ENCODE measurements at regions of chr21 and their contacts with region 1.

Region 1: DNA sequence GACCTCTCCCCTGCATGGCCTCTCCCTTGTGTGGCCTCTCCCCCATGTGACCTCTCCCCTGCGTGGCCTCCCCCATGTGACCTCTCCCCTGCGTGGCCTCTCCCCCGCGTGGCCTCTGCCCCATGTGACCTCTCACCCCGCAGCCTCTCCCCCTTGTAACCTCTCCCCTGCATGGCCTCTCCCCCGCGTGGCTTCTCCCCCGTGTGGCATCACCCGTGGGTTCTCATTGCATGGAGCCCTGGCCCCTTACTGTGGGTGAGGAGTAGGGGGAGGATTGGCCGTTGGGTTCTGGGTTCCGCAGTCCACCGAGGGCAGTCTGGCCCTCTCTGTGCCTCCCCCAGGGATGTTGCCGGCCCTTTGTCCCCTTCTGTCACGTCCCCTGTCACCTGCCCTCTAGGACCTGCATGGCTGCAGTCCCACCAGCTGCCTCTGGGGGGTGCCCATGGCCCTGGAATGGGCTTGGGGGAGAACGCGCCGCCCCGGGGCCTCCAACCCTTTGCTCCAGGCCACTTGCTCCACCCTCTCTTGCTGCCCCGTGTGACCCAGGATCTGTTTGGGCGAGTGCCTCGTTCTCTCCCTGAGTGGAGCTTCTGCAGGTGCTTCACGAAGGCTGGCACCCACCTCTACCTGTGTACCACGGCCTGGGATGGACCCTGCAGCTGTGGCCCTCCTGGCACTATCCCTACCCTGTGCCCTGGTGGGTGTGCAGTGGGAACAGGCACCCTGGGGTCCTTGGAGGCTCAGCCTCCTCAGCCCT is 21.3 kb downstream of the RRP1 start:
- DNase-seq: peak; percentile 71 to 90 (median 84)
- H3K4me3 ChIP-seq: no peak overlapping the region
- H3K27ac ChIP-seq: no peak overlapping the region
- H3K4me1 ChIP-seq: peaks cover 28% of the 10 kb centered on the region
- H3K27me3 ChIP-seq: no peaks in the 10 kb centered on the region
- CTCF ChIP-seq: peak; percentile 83 to 90 (median 89)
- EP300 ChIP-seq: no peak
- POLR2A ChIP-seq: no peak

Region 2: DNA sequence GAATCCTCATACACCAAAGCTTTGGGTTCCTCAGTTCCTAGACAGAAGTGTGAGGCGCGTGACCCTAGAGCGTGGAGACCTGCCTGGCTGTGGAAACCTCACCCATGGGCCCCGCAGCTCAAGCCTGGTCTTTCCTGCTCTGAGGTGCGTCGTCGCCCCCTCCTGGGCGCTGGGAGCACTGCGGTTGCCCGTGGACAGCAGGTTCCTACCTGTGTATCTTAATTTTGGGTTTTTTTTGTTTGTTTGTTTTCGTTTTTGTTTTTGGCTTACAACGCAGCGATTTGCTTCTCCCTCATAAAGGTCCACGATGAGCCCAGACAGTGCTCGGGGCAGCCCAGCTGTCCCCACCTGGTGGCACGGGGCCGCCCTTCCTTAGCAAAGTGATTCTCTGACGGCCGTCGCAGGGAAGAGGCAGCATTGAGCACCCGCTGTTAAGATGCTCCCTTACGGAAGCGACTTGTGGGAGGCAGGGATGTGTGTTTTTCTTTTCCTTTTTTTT is 164.9 kb after region 1 on chr21:
- intact Hi-C with region 1: loop called in 1 of 4 experiments (anchors 5 kb)
- DNase-seq: peak; percentile 76 to 91 (median 86)
- H3K4me3 ChIP-seq: no peak overlapping the region
- H3K27ac ChIP-seq: no peak overlapping the region
- H3K4me1 ChIP-seq: peaks cover 9% of the 10 kb centered on the region
- H3K27me3 ChIP-seq: no peaks in the 10 kb centered on the region
- CTCF ChIP-seq: peak; percentile 72 to 85 (median 84)
- EP300 ChIP-seq: no peak
- POLR2A ChIP-seq: no peak

Region 3: GRCh38 chr21:44299458-44300261 is 489.0 kb after region 1 on chr21 and contains the start of gene PFKL:
- intact Hi-C with region 1: loop called in 3 of 4 experiments (anchors 5 to 10 kb)
- DNase-seq: peak; percentile 60 to 82 (median 73)
- H3K4me3 ChIP-seq: peak within 1 kb of the TSS; percentile 98
- H3K27ac ChIP-seq: peak within 1 kb of the TSS; percentile 78 to 88
- H3K4me1 ChIP-seq: peaks cover 16% of the 10 kb centered on the region
- H3K27me3 ChIP-seq: no peaks in the 10 kb centered on the region
- CTCF ChIP-seq: no peak
- EP300 ChIP-seq: no peak
- POLR2A ChIP-seq: peak; percentile 4
- total RNA-seq, gene PFKL: 38.7 to 104 (median 88.7) TPM